Right cardiac atrium (tissue), 5 donors: ENCODE measurements at regions of chr6 and their contacts with region 1.

Region 1: GRCh38 chr6:163180874-163181541 is 233.5 kb upstream of the QKI start:
- DNase-seq: peak; percentile 80 to 92 (median 90)
- ATAC-seq: peak; percentile 96
- H3K4me3 ChIP-seq: no peak overlapping the region
- H3K27ac ChIP-seq: no peak overlapping the region
- H3K4me1 ChIP-seq: peaks cover 3% of the 10 kb centered on the region
- H3K27me3 ChIP-seq: no peaks in the 10 kb centered on the region

Region 2: GRCh38 chr6:163263196-163263595 is 82.2 kb after region 1 on chr6:
- intact Hi-C with region 1: no loop called
- DNase-seq: peak; percentile 63 to 81 (median 65)
- ATAC-seq: peak; percentile 67
- H3K4me3 ChIP-seq: no peak overlapping the region
- H3K27ac ChIP-seq: peak overlapping the region; percentile 89
- H3K4me1 ChIP-seq: peaks cover 3% of the 10 kb centered on the region
- H3K27me3 ChIP-seq: no peaks in the 10 kb centered on the region

Region 3: GRCh38 chr6:163398815-163399214 is 217.8 kb after region 1 on chr6:
- intact Hi-C with region 1: no loop called
- DNase-seq: peak; percentile 43 to 78 (median 76)
- ATAC-seq: peak in 1 of 2 donors; percentile 64
- H3K4me3 ChIP-seq: no peak overlapping the region
- H3K27ac ChIP-seq: no peak overlapping the region
- H3K4me1 ChIP-seq: peaks cover 2% of the 10 kb centered on the region
- H3K27me3 ChIP-seq: no peaks in the 10 kb centered on the region

Region 4: GRCh38 chr6:163413345-163414116 is 232.5 kb after region 1 on chr6:
- intact Hi-C with region 1: loop called in 2 of 4 experiments (anchors 5 kb)
- DNase-seq: peak; percentile 88 to 96 (median 96)
- ATAC-seq: peak; percentile 92 to 93
- H3K4me3 ChIP-seq: peak overlapping the region; percentile 100
- H3K27ac ChIP-seq: peak overlapping the region; percentile 99
- H3K4me1 ChIP-seq: no peaks in the 10 kb centered on the region
- H3K27me3 ChIP-seq: no peaks in the 10 kb centered on the region

Region 5: GRCh38 chr6:163427498-163428254 is 246.7 kb after region 1 on chr6:
- intact Hi-C with region 1: loop called in 1 of 4 experiments (anchors 10 kb)
- DNase-seq: peak in 1 of 3 donors; percentile 34
- ATAC-seq: peak; percentile 51 to 63
- H3K4me3 ChIP-seq: no peak overlapping the region
- H3K27ac ChIP-seq: no peak overlapping the region
- H3K4me1 ChIP-seq: peaks cover 12% of the 10 kb centered on the region
- H3K27me3 ChIP-seq: no peaks in the 10 kb centered on the region

Region 6: DNA sequence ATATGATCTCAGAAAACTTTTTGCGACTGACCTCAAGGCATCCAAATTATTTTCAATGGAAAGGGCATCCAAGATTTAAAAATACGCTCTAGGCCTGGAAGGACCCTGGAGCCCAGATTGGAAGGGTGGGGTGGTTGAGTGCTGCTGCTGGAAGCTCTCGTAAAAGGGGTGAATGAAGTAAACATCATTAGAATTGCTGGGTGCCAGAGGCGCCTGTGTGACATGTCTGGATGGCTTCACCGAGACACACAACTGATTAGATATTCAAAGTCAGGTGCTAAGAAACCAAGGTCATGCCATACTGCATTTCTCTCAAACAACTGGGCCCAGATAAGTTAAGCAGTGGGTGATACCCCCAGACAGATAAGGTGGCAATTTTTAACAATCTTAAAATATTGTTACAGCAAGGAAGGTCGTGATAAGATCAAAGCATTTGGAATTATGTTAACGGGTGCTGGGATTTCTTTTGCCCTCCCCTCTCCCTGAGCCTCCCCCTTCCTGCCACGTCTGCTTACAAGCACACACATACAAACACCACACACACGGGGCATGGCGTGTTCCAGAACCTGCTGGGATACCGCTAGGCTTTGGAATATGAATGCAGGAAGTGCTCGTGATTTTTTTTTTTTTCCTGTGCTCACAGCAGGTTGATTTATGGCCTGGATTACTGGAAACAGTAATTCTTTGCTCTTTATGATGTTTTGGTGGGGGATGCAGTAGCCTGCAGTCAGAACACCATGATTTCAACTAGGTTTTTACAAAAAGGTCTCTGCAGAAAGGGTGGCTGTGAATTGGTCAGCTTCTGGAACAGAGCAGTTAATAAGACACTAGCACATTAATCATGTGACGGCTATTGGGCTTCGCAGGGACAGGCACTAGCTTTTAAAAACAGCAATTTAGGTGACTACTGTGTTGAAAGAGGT is 784.7 kb after region 1 on chr6:
- intact Hi-C with region 1: loop called in 1 of 4 experiments (anchors 10 kb)
- DNase-seq: peak in 2 of 3 donors; percentile 59 to 67
- ATAC-seq: peak; percentile 55 to 64
- H3K4me3 ChIP-seq: no peak overlapping the region
- H3K27ac ChIP-seq: peak overlapping the region; percentile 65
- H3K4me1 ChIP-seq: peaks cover 3% of the 10 kb centered on the region
- H3K27me3 ChIP-seq: no peaks in the 10 kb centered on the region